ENCODE measurements at regions of chr22 and their contacts with region 1.

Region 1: DNA sequence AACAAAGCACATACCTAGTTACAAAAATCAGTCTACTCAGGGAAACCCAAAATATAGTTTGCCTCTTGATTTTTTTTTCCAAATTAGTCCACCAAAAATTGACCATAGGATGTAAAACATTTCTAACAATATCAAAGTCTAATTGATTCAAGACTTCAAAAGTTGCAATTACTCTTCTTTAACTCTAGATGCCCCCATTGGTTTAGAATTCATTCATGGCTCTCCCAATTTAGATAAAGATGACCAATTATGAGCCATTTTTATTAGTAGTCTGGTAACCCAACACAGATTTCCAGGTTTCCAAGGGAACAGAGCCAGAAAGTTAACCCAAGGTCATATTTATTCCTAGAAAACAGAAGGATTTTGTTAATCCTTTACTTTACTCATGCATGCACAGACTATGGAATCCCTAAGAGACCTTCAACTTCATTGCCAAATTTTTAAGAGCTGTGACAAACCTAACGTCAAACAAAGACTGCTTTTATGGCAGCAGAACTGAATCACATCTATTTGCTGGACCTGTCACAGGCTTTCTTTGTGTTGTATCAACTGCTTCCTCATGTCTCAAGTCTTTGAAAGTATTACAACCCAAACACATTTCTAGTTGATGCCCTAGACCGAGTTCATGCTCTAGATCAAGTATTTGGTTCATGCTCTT is 55.3 kb downstream of the C22orf42 start:
- DNase-seq: no peak
- ATAC-seq: no peak
- H3K4me3 ChIP-seq: no peak overlapping the region
- H3K27ac ChIP-seq: no peak overlapping the region
- H3K4me1 ChIP-seq: no peaks in the 10 kb centered on the region
- H3K27me3 ChIP-seq: no peaks in the 10 kb centered on the region
- CTCF ChIP-seq: peak; percentile 6 to 39 (median 30); a peak in 3 of 6 replicates
- EP300 ChIP-seq: no peak
- POLR2A ChIP-seq: no peak
- RAD21 ChIP-seq: peak; percentile 57

Region 2: GRCh38 chr22:31530823-31531195 is 573.0 kb before region 1 on chr22:
- CTCF ChIA-PET with region 1: no interaction called
- POLR2A ChIA-PET with region 1: no interaction called
- RAD21 ChIA-PET with region 1: no interaction called
- SMC1A ChIA-PET with region 1: no interaction called
- in situ Hi-C with region 1: no loop called
- intact Hi-C with region 1: no loop called
- DNase-seq: no peak
- ATAC-seq: no peak
- H3K4me3 ChIP-seq: no peak overlapping the region
- H3K27ac ChIP-seq: no peak overlapping the region
- H3K4me1 ChIP-seq: peaks cover under 1% of the 10 kb centered on the region; the same call in 1 of the 2 replicates
- H3K27me3 ChIP-seq: no peaks in the 10 kb centered on the region
- CTCF ChIP-seq: no peak
- EP300 ChIP-seq: no peak
- POLR2A ChIP-seq: no peak
- RAD21 ChIP-seq: no peak

Region 3: DNA sequence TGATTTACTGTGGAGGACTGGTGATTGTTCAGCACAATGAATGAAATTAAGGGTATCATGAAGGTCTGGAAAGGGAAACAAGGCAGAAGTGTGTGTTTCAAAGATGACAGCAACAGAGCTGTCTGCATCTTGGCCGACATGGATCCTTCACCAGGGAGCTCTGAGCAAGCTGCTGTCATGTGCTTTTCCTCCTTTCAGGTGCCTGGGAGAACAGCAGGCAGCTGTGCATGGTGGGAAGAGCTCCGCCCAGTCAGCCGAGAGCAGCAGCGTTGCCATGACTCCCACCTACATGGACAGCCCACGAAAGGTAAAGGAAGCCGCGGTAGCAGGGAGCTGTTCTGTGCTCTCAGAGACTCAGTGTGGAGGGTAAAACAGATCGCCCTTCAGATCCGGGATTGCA is 246.5 kb before region 1 on chr22:
- CTCF ChIA-PET with region 1: no interaction called
- POLR2A ChIA-PET with region 1: no interaction called
- RAD21 ChIA-PET with region 1: no interaction called
- SMC1A ChIA-PET with region 1: no interaction called
- in situ Hi-C with region 1: no loop called
- intact Hi-C with region 1: no loop called
- DNase-seq: no peak
- ATAC-seq: no peak
- H3K4me3 ChIP-seq: no peak overlapping the region
- H3K27ac ChIP-seq: no peak overlapping the region
- H3K4me1 ChIP-seq: no peaks in the 10 kb centered on the region
- H3K27me3 ChIP-seq: no peaks in the 10 kb centered on the region
- CTCF ChIP-seq: no peak
- EP300 ChIP-seq: no peak
- POLR2A ChIP-seq: no peak
- RAD21 ChIP-seq: no peak

Region 4: GRCh38 chr22:32202539-32203180 is 98.9 kb after region 1 on chr22:
- CTCF ChIA-PET with region 1: no interaction called
- POLR2A ChIA-PET with region 1: no interaction called
- RAD21 ChIA-PET with region 1: no interaction called
- SMC1A ChIA-PET with region 1: no interaction called
- in situ Hi-C with region 1: no loop called
- intact Hi-C with region 1: loop called (anchors 10 kb)
- DNase-seq: no peak
- ATAC-seq: peak; percentile 79
- H3K4me3 ChIP-seq: no peak overlapping the region
- H3K27ac ChIP-seq: no peak overlapping the region
- H3K4me1 ChIP-seq: no peaks in the 10 kb centered on the region
- H3K27me3 ChIP-seq: peaks cover 0 to 4% of the 10 kb centered on the region in 2 experiments; a peak in 2 of 4 replicates
- CTCF ChIP-seq: peak; percentile 43 to 54 (median 49)
- EP300 ChIP-seq: no peak
- POLR2A ChIP-seq: no peak
- RAD21 ChIP-seq: 0 out of 2 replicates have a peak, but pooled peaks have one; percentile 12

Region 5: GRCh38 chr22:32265882-32266767 is 162.3 kb after region 1 on chr22:
- CTCF ChIA-PET with region 1: interaction called, 4 read pairs
- POLR2A ChIA-PET with region 1: no interaction called
- RAD21 ChIA-PET with region 1: no interaction called
- SMC1A ChIA-PET with region 1: no interaction called
- in situ Hi-C with region 1: no loop called
- intact Hi-C with region 1: loop called (anchors 10 kb)
- DNase-seq: no peak
- ATAC-seq: peak; percentile 82
- H3K4me3 ChIP-seq: no peak overlapping the region
- H3K27ac ChIP-seq: no peak overlapping the region
- H3K4me1 ChIP-seq: no peaks in the 10 kb centered on the region
- H3K27me3 ChIP-seq: 0 out of 4 replicates have a peak, but pooled peaks cover 0 to 1% of the 10 kb centered on the region in 2 experiments
- CTCF ChIP-seq: peak; percentile 73 to 83 (median 79)
- EP300 ChIP-seq: no peak
- POLR2A ChIP-seq: no peak
- RAD21 ChIP-seq: peak; percentile 51

Region 6: DNA sequence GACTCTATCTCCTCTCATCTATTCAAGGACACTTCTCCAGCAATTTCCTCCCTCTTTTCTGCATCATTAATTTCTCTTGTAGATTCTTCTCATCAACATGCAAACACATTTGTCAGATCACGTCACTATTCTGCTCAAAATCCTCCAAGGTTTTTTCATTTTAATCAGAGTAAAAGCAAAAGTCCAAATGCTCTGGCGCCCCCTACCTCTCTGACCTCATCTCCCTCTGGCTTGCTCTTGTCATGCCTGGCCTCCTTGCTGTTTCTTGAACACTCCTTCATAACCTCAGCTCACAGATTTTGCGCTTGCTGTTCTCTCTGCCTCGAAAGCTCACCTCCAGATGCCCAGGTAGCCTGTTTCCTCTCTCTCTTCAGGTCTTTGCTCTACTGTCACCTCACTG is 285.9 kb after region 1 on chr22:
- CTCF ChIA-PET with region 1: no interaction called
- POLR2A ChIA-PET with region 1: no interaction called
- RAD21 ChIA-PET with region 1: no interaction called
- SMC1A ChIA-PET with region 1: no interaction called
- in situ Hi-C with region 1: no loop called
- intact Hi-C with region 1: no loop called
- DNase-seq: no peak
- ATAC-seq: no peak; the same call in 2 of the 3 replicates
- H3K4me3 ChIP-seq: no peak overlapping the region
- H3K27ac ChIP-seq: no peak overlapping the region
- H3K4me1 ChIP-seq: no peaks in the 10 kb centered on the region
- H3K27me3 ChIP-seq: no peaks in the 10 kb centered on the region
- CTCF ChIP-seq: peak in 1 of 3 experiments; percentile 34; a peak in 2 of 6 replicates
- EP300 ChIP-seq: no peak
- POLR2A ChIP-seq: no peak
- RAD21 ChIP-seq: no peak

Measured in GM12878 (cell line).